Gastrocnemius medialis (tissue), 4 donors: ENCODE measurements at regions of chr12 and their contacts with region 1.

Region 1: GRCh38 chr12:121209624-121210572 is at the start of gene P2RX4:
- DNase-seq: peak; percentile 38 to 63
- ATAC-seq: peak; percentile 67 to 75
- H3K4me3 ChIP-seq: peak within 1 kb of the TSS; percentile 60 to 74 (median 71)
- H3K27ac ChIP-seq: peak within 1 kb of the TSS; percentile 65 to 80 (median 74)
- H3K4me1 ChIP-seq: peaks cover 0 to 8% of the 10 kb centered on the region in 2 donors
- H3K27me3 ChIP-seq: no peaks in the 10 kb centered on the region
- CTCF ChIP-seq: no peak
- POLR2A ChIP-seq: peak; percentile 60 to 68
- total RNA-seq, gene P2RX4: 3.9 to 7.9 (median 6.1) TPM

Region 2: GRCh38 chr12:121128970-121129810 is 80.7 kb before region 1 on chr12:
- in situ Hi-C with region 1: no loop called
- intact Hi-C with region 1: loop called (anchors 5 kb)
- DNase-seq: peak; percentile 31 to 67
- ATAC-seq: peak; percentile 77 to 85
- H3K4me3 ChIP-seq: peak overlapping the region in 3 of 4 donors; percentile 33 to 53 (median 41)
- H3K27ac ChIP-seq: peak overlapping the region in 2 of 4 donors; percentile 39 to 44
- H3K4me1 ChIP-seq: peaks cover 4 to 8% of the 10 kb centered on the region in 2 donors
- H3K27me3 ChIP-seq: no peaks in the 10 kb centered on the region
- CTCF ChIP-seq: no peak
- POLR2A ChIP-seq: no peak